Motor neuron (in vitro differentiated cells): ENCODE measurements at regions of chr10 and their contacts with region 1.

Region 1: GRCh38 chr10:122435212-122435827 is 19.1 kb upstream of the ARMS2 start:
- ATAC-seq: peak in 3 of 8 experiments; percentile 31 to 46 (median 36)
- H3K4me3 ChIP-seq: no peak overlapping the region
- H3K27ac ChIP-seq: no peak overlapping the region
- H3K4me1 ChIP-seq: no peaks in the 10 kb centered on the region

Region 2: DNA sequence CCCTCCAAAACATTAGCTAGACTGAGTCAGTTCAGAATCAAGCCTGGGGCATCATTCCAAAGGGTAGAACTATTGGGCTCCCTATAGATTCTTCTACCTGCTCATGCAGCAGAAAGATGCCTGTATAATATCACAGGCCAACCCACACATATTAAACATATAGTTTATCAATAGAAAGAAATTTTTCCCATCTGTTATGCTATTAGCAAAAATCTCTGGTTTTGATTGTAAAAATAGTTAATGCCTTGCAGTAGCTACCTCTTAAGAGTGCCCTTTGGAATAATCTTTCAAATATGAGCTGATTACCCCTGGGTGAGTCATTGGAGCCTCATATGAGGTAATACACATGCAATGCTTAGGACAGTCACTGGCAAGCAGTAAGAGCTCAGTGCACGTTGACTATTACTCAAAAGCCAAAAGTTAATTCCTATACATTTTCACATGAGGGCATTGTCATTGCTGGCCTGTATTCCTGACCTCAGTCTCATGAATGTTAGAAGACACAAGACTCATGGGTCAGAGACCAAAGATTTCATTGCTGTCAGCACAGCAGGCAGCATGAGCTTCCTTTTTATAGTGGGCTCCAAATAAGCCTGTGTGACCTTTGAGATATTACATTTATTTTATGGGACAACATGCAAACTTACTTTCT is 1017.1 kb before region 1 on chr10:
- in situ Hi-C with region 1: no loop called
- ATAC-seq: peak in 5 of 8 experiments; percentile 57 to 84 (median 81)
- H3K4me3 ChIP-seq: no peak overlapping the region
- H3K27ac ChIP-seq: no peak overlapping the region
- H3K4me1 ChIP-seq: peaks cover 14 to 19% of the 10 kb centered on the region in 2 donors

Region 3: GRCh38 chr10:122298598-122299301 is 136.6 kb before region 1 on chr10:
- in situ Hi-C with region 1: loop called in 4 of 9 experiments (anchors 25 kb)
- ATAC-seq: peak; percentile 78 to 97 (median 88)
- H3K4me3 ChIP-seq: no peak overlapping the region
- H3K27ac ChIP-seq: no peak overlapping the region
- H3K4me1 ChIP-seq: no peaks in the 10 kb centered on the region

Region 4: GRCh38 chr10:122307669-122308486 is 127.4 kb before region 1 on chr10:
- in situ Hi-C with region 1: loop called in 1 of 9 experiments (anchors 25 kb)
- ATAC-seq: peak in 6 of 8 experiments; percentile 53 to 96 (median 88)
- H3K4me3 ChIP-seq: no peak overlapping the region
- H3K27ac ChIP-seq: no peak overlapping the region
- H3K4me1 ChIP-seq: no peaks in the 10 kb centered on the region

Region 5: DNA sequence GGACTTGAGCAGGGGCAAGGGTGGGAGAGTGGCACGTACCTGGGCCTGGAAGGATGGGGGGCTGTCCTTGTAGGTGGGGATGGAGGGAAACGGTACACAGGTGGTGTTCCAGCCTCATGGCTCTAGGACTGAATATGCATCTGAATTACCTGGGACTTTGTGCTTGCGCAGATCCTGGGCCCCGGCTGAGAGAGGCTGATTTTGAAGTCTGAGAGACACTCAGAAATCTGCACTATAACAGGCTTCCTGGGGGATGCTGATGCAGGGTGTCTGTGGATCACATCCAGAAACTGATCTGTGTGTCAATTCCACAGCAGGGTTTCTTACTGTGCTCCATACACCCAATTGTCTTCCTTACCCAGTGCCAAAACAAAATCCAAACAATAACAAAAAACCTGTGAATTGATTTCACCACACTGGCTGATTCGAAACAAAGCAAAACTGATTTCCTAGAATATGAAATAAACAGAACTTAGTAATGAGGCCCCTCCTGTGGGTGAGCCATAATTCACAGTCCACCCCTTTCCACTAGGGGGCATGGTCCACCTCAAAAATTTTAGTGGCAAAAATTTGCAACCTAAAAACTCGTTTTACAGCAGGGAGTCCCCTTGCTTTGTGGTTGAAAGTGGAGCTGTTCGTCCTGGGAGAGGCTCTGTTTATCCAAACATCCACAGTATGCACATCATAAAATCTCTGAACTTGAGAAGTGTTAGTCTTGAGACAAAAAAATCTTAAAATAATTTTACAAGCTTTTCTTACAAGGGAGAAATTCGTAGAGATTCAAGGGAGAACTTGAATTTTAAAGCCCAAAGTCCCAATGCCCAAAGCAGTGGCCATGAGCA is 92.8 kb before region 1 on chr10:
- in situ Hi-C with region 1: loop called in 1 of 9 experiments (anchors 25 kb)
- ATAC-seq: peak in 5 of 8 experiments; percentile 29 to 88 (median 81)
- H3K4me3 ChIP-seq: no peak overlapping the region
- H3K27ac ChIP-seq: no peak overlapping the region
- H3K4me1 ChIP-seq: no peaks in the 10 kb centered on the region